Posterior vena cava (tissue), 2 donors: ENCODE measurements at regions of chr20 and their contacts with region 1.

Region 1: GRCh38 chr20:17189976-17190695 is 36.7 kb upstream of the PCSK2 start:
- DNase-seq: no peak

Region 2: DNA sequence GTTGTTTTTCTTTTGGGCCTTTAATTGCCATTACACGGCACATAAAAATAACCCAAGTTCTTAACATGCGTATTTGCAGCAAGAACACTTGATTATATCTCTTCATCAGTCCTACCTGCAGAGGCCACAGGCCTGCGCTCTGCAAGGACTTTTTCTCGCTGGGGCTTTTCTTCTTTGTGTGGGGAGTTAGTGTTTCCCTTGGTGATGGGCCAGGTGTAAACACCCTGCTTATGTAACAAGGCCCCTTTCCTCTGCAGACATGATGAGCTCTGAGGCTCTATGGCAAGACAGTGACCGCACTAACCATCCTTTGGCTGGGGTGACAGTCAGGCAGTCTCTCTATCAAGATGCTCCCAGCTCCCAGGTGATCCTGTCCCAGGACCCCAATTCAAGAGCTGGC is 61.0 kb before region 1 on chr20:
- intact Hi-C with region 1: loop called in 1 of 2 experiments (anchors 2 kb)
- DNase-seq: no peak

Region 3: GRCh38 chr20:17226410-17227218 is 36.5 kb after region 1 on chr20 and contains the start of gene PCSK2:
- intact Hi-C with region 1: no loop called
- DNase-seq: peak; percentile 78
- total RNA-seq, gene PCSK2: 0.24 to 0.32 TPM